Activated CD8-positive, alpha-beta memory T cell treated with anti-CD3 and anti-CD28 coated beads, Interleukin-2, amount 10 ng/mL, durations not matched to agents 7 days and 5 days (primary cell): ENCODE measurements at regions of chr6 and their contacts with region 1.

Region 1: GRCh38 chr6:33430991-33431879 is 11.4 kb downstream of the SYNGAP1 start:
- DNase-seq: peak; percentile 94
- ATAC-seq: peak; percentile 73
- H3K4me3 Mint-ChIP-seq: peak overlapping the region; percentile 79
- H3K27ac Mint-ChIP-seq: peak overlapping the region; percentile 83
- H3K4me1 Mint-ChIP-seq: peaks cover 57% of the 10 kb centered on the region
- H3K27me3 Mint-ChIP-seq: no peaks in the 10 kb centered on the region

Region 2: GRCh38 chr6:33417903-33418689 is 13.1 kb before region 1 on chr6 and contains the start of gene CUTA:
- CTCF ChIA-PET with region 1: interaction called, 27 read pairs
- DNase-seq: peak; percentile 100
- ATAC-seq: peak; percentile 90
- H3K4me3 Mint-ChIP-seq: peak within 1 kb of the TSS; percentile 97
- H3K27ac Mint-ChIP-seq: peak within 1 kb of the TSS; percentile 99
- H3K4me1 Mint-ChIP-seq: peaks cover 58% of the 10 kb centered on the region
- H3K27me3 Mint-ChIP-seq: peaks cover 15% of the 10 kb centered on the region
- total RNA-seq, gene CUTA: 196 to 197 TPM